Activated B cell treated with CpG ODN at 0.5 μM for 24 hours (primary cell): ENCODE measurements at regions of chr12 and their contacts with region 1.

Region 1: DNA sequence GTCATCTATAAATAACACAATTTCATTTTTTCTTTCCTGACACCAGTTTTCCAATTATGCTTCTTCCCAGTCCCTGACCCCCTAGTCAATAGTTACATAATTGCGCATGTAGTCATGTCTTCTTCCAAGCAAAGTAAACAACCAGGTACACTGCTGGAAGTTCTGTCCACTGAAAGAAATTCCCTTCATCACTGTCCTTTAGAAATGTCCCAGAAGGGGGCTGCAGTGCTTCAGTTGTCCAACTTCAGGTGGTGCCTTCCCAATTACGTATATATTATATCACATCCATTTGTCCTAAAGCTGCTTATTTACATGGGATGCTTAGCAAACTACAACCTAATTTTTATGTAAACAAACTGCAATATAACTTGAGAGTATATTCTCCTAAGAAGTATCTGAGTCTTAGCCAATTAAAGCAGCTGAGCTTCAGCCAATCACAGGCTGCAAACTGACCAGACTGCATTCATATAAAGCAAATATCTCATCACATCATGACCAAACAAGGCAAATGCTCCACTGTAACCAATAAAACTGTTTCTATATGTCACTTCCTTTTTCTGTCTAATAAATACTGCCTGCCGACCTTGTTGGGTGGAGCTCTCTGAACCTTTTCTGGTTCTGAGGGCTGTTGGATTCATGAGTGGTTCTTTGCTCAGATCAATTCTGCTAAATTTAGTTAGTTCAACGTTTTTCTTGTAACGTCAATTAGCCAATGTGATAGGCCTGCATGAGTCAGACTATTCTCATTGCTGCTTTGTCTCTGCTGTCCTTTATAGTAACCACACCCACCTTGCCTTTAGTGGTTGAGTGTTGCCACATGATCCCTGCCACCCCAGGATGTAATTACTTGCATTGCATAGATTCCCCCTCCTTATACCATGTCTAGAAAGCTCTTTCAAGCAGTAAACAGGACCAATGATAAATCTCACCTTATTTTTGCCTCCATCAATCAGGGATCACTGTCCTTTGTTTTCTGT is 239.3 kb downstream of the ALG10B start:
- DNase-seq: no peak
- ATAC-seq: no peak
- H3K4me3 Mint-ChIP-seq: no peak overlapping the region
- H3K27ac Mint-ChIP-seq: no peak overlapping the region
- H3K4me1 Mint-ChIP-seq: no peaks in the 10 kb centered on the region
- H3K27me3 Mint-ChIP-seq: no peaks in the 10 kb centered on the region
- CTCF ChIP-seq: no peak

Region 2: DNA sequence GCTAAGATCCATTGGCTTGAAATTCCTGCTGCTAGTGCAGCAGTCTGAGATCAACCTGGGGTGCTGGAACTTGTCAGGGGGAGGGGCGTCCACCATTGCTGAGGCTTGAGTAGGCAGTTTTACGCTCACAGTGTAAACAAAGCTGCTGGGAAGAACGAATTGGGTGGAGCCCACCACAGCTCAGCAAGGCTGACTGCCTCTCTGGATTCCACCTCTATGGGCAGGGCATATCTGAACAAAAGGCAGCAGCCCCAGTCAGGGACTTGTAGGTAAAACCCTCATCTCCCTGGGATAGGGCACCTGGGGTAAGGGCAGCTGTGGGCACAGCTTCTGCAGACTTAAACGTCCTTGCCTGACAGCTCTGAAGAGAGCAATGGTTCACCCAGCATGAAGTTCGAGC is 47.7 kb before region 1 on chr12:
- CTCF ChIA-PET with region 1: no interaction called
- POLR2A ChIA-PET with region 1: no interaction called
- intact Hi-C with region 1: loop called (anchors 1 kb)
- DNase-seq: no peak
- ATAC-seq: no peak
- H3K4me3 Mint-ChIP-seq: no peak overlapping the region
- H3K27ac Mint-ChIP-seq: no peak overlapping the region
- H3K4me1 Mint-ChIP-seq: no peaks in the 10 kb centered on the region
- H3K27me3 Mint-ChIP-seq: no peaks in the 10 kb centered on the region
- CTCF ChIP-seq: no peak

Region 3: DNA sequence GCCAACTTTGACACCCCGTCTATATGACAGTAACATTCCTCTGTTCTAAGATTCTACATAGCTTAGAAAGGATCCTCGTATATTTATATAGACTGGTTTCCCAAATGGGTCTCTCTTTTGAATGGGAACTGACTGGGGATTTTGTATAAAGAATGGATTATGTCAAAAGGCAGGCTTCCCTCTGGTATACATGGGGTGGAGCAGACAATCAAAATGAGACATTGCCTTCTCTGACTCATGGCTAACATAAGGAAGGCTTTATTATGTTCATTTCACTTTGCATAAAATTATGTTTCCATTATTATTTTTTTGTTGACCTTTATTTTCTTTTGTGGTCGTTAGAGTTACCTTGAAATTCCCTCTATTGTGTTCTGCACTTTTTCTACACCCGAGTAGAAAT is 28.3 kb before region 1 on chr12:
- CTCF ChIA-PET with region 1: no interaction called
- POLR2A ChIA-PET with region 1: no interaction called
- intact Hi-C with region 1: no loop called
- DNase-seq: no peak
- ATAC-seq: no peak
- H3K4me3 Mint-ChIP-seq: no peak overlapping the region
- H3K27ac Mint-ChIP-seq: no peak overlapping the region
- H3K4me1 Mint-ChIP-seq: no peaks in the 10 kb centered on the region
- H3K27me3 Mint-ChIP-seq: no peaks in the 10 kb centered on the region
- CTCF ChIP-seq: no peak